Activated T-helper 1 cell treated with anti-CD3 and anti-CD28 coated beads, Interleukin-12 subunit alpha, Interleukin-12 subunit beta, Interleukin-2, Interleukin-4 antibody, amounts not matched to agents 30 ng/mL and 10 ng/mL and 1 ng/mL, durations not matched to agents 14 hours and 24 hours and 36 hours (primary cell): ENCODE measurements at regions of chr16 and their contacts with region 1.

Region 1: GRCh38 chr16:23877107-23878090 is 41.6 kb downstream of the PRKCB start:
- DNase-seq: no peak
- H3K4me3 Mint-ChIP-seq: no peak overlapping the region
- H3K27ac Mint-ChIP-seq: no peak overlapping the region
- H3K4me1 Mint-ChIP-seq: peaks cover 79% of the 10 kb centered on the region
- H3K27me3 Mint-ChIP-seq: no peaks in the 10 kb centered on the region

Region 2: DNA sequence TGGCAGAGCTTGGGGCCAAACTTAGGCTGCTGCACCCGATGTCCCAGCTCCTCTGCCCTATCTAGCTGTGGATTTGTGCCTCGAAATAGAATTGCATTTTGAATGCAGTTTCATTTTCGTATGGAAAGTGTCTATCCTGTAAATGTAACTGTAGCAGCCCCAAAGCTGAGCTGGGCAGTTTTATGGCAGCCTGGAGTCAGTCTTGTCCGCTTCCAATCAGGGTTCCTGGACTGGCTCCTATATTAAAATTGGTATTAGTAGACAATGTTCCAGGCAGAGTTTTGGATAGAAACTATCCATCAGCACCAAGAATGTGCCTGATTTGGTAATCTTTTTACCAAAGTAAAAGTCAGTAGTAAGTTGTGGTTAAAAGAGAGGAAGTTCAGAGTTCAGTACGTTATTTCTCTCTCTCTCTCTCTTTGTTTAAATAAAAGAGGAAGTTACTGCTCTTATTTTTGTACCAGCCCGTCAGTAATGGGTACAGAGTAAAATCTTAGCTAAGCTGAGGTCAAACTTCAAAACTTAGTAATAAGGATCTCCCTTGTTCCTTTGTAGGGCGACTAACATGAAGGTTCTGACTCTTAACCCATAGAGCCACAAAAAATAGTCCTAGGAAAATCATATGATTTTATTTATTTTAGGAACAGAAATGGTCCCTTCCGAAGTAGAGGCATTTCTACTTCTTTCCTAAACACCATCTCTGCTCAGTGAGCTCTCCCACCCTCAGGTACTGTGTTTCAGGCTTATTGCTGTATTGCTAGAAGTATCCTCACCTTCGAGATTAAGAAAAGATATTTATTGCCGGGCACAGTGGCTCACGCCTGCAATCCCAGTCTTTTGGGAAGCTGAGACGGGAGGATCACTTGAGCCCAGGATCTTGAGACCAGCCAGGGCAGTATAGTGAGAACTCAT is 13.6 kb before region 1 on chr16:
- intact Hi-C with region 1: no loop called
- DNase-seq: peak; percentile 30
- H3K4me3 Mint-ChIP-seq: peak overlapping the region; percentile 84
- H3K27ac Mint-ChIP-seq: peak overlapping the region; percentile 91
- H3K4me1 Mint-ChIP-seq: peaks cover 82% of the 10 kb centered on the region
- H3K27me3 Mint-ChIP-seq: no peaks in the 10 kb centered on the region

Region 3: GRCh38 chr16:23924128-23924527 is 46.7 kb after region 1 on chr16:
- intact Hi-C with region 1: loop called (anchors 5 kb)
- DNase-seq: no peak
- H3K4me3 Mint-ChIP-seq: no peak overlapping the region
- H3K27ac Mint-ChIP-seq: no peak overlapping the region
- H3K4me1 Mint-ChIP-seq: peaks cover 37% of the 10 kb centered on the region
- H3K27me3 Mint-ChIP-seq: no peaks in the 10 kb centered on the region

Region 4: DNA sequence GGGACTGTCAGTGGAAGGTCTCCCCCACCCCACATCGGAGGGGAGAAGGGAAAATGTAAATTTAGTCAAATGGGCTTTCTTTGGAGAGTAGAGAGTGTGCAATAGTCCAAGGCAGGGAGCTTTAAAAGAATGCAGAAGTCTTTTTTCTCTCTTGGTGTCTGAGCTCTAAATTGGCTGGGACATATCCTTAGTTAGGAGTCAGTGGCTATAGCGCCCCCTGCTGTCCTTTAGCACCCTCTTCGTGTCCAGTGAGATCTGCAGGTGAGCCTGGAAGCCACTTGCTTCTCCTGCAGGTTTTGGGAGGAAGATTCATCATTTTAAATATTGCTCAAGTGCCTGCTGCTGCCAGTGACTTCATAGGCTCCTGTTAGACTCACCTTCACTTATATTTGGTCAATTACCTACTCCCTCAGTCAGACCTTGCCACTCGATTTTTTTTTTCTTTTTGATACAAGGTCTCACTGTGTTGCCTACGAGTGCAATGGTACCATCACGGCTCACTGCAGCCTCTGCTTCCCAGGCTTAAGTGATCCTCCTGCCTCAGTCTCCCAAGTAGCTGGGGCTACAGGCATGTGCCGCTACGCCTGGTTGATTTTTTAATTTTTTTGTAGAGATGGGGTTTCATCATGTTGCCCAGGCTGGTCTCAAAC is 133.2 kb after region 1 on chr16:
- intact Hi-C with region 1: loop called (anchors 2 kb)
- DNase-seq: peak; percentile 63
- H3K4me3 Mint-ChIP-seq: no peak overlapping the region
- H3K27ac Mint-ChIP-seq: no peak overlapping the region
- H3K4me1 Mint-ChIP-seq: peaks cover 41% of the 10 kb centered on the region
- H3K27me3 Mint-ChIP-seq: no peaks in the 10 kb centered on the region

Region 5: DNA sequence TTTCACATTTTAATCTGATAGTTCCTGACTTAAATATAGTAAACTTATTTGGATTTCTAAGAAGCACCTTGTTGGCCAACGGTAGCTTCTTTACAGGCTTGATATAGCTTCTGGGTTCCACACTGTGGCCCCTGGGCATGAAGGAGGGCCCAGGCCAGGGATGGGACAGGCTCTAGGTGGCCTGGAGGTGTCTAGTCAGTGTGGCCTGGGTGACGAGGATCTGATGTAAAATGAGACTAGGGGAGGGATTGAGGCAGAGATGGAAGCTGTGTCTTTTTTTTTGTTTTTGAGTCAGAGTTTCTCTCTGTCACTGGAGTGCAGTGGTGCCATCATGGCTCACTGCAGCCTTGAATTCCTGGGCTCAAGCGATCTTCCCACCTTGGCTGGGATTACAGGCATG is 145.4 kb after region 1 on chr16:
- intact Hi-C with region 1: no loop called
- DNase-seq: no peak
- H3K4me3 Mint-ChIP-seq: no peak overlapping the region
- H3K27ac Mint-ChIP-seq: no peak overlapping the region
- H3K4me1 Mint-ChIP-seq: peaks cover 23% of the 10 kb centered on the region
- H3K27me3 Mint-ChIP-seq: no peaks in the 10 kb centered on the region

Region 6: GRCh38 chr16:24372824-24373223 is 495.4 kb after region 1 on chr16:
- intact Hi-C with region 1: no loop called
- DNase-seq: no peak
- H3K4me3 Mint-ChIP-seq: no peak overlapping the region
- H3K27ac Mint-ChIP-seq: no peak overlapping the region
- H3K4me1 Mint-ChIP-seq: no peaks in the 10 kb centered on the region
- H3K27me3 Mint-ChIP-seq: peaks cover 2% of the 10 kb centered on the region